ENCODE measurements at regions of chr7 and their contacts with region 1.

Region 1: GRCh38 chr7:151626422-151627115 is 106.9 kb upstream of the RHEB start:
- DNase-seq: peak in 7 of 9 donors; percentile 16 to 41 (median 22)
- ATAC-seq: peak; percentile 77
- H3K4me3 ChIP-seq: no peak overlapping the region
- H3K4me3 Mint-ChIP-seq: no peak overlapping the region
- H3K27ac ChIP-seq: no peak overlapping the region
- H3K27ac Mint-ChIP-seq: peak overlapping the region in 3 of 9 donors; percentile 34 to 67 (median 39)
- H3K4me1 ChIP-seq: peaks cover 12% of the 10 kb centered on the region in 2 donors
- H3K4me1 Mint-ChIP-seq: peaks cover 39 to 72% (median 59%) of the 10 kb centered on the region in 7 donors
- H3K27me3 ChIP-seq: no peaks in the 10 kb centered on the region
- H3K27me3 Mint-ChIP-seq: no peaks in the 10 kb centered on the region

Region 2: GRCh38 chr7:151665368-151665767 is 38.8 kb after region 1 on chr7:
- CTCF ChIA-PET with region 1: no interaction called
- POLR2A ChIA-PET with region 1: no interaction called
- intact Hi-C with region 1: no loop called
- DNase-seq: no peak
- ATAC-seq: no peak
- H3K4me3 ChIP-seq: no peak overlapping the region
- H3K4me3 Mint-ChIP-seq: no peak overlapping the region
- H3K27ac ChIP-seq: no peak overlapping the region
- H3K27ac Mint-ChIP-seq: peak overlapping the region in 1 of 9 donors; percentile 10
- H3K4me1 ChIP-seq: no peaks in the 10 kb centered on the region
- H3K4me1 Mint-ChIP-seq: peaks cover 0 to 26% (median 5%) of the 10 kb centered on the region in 7 donors
- H3K27me3 ChIP-seq: no peaks in the 10 kb centered on the region
- H3K27me3 Mint-ChIP-seq: no peaks in the 10 kb centered on the region

Region 3: DNA sequence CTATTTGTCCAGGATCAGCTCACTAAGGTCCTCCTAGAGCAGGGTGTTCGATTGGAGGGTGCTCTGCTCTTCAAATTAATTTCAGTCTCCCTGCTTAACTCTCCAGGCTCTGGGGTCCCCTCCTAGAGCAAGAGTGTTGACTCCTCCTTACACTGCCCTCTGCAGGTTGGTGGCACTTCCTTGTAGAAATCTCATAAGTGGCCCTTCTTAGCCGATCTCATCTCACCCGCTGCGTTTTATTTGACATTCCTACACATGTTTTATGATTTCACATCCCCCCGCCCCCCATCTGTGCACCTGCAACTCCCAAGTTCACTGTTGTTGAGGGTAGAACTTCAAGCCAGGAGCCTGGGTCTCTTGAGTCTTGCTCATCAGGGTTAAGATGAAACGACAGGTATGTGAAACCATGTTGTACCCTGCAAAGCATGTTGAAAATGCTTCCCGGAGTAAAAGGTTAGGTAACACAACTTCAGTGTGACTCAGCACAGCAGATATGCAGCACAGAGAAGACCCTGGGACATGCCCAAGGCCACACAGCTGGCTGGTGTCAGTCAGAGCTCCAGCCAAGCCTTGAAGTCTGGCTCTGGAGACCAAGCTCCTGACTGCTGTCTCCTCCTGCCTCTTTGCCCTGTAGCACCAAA is 79.2 kb after region 1 on chr7:
- CTCF ChIA-PET with region 1: no interaction called
- POLR2A ChIA-PET with region 1: no interaction called
- intact Hi-C with region 1: loop called in 1 of 2 experiments (anchors 2 kb)
- DNase-seq: peak in 4 of 9 donors; percentile 6 to 21 (median 10)
- ATAC-seq: peak; percentile 56
- H3K4me3 ChIP-seq: no peak overlapping the region
- H3K4me3 Mint-ChIP-seq: peak overlapping the region in 3 of 10 donors; percentile 4 to 19 (median 12)
- H3K27ac ChIP-seq: no peak overlapping the region
- H3K27ac Mint-ChIP-seq: peak overlapping the region in 3 of 9 donors; percentile 20 to 58 (median 29)
- H3K4me1 ChIP-seq: no peaks in the 10 kb centered on the region
- H3K4me1 Mint-ChIP-seq: peaks cover 4 to 26% (median 19%) of the 10 kb centered on the region in 7 donors
- H3K27me3 ChIP-seq: no peaks in the 10 kb centered on the region
- H3K27me3 Mint-ChIP-seq: no peaks in the 10 kb centered on the region

Region 4: DNA sequence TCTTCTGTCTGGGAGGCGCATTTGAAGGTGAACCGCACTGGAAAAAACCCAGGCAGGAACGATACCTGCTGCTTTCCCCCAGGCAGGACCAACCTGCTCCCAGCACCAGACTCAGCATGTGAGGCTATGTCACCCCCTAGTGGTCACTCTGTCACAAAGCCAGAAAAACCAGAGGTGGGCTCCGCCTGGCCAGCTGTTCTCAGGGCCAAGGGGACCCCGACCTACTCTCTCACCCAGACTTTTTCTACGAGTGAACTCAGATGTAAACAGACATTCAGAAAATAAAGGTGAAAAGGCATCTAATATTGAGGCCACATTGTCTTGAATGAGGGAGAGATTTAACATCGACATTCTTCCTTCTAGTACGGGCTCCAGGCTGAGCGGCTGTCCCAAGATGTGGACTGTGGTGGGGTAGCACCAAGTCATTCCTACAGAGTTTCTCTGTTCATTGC is 133.0 kb after region 1 on chr7:
- CTCF ChIA-PET with region 1: interaction called, 4 read pairs
- POLR2A ChIA-PET with region 1: no interaction called
- intact Hi-C with region 1: loop called in 1 of 2 experiments (anchors 1 kb)
- DNase-seq: peak in 8 of 9 donors; percentile 38 to 67 (median 58)
- ATAC-seq: peak; percentile 67
- H3K4me3 ChIP-seq: no peak overlapping the region
- H3K4me3 Mint-ChIP-seq: no peak overlapping the region
- H3K27ac ChIP-seq: no peak overlapping the region
- H3K27ac Mint-ChIP-seq: peak overlapping the region in 6 of 9 donors; percentile 8 to 83 (median 56)
- H3K4me1 ChIP-seq: peaks cover 12 to 22% of the 10 kb centered on the region in 2 donors
- H3K4me1 Mint-ChIP-seq: peaks cover 17 to 60% (median 33%) of the 10 kb centered on the region in 7 donors
- H3K27me3 ChIP-seq: no peaks in the 10 kb centered on the region
- H3K27me3 Mint-ChIP-seq: no peaks in the 10 kb centered on the region